ENCODE measurements at regions of chr11 and their contacts with region 1.

Region 1: GRCh38 chr11:120801801-120802689 is 221.9 kb upstream of the TBCEL start:
- DNase-seq: no peak
- H3K4me3 ChIP-seq: no peak overlapping the region
- CTCF ChIP-seq: peak; percentile 82

Region 2: DNA sequence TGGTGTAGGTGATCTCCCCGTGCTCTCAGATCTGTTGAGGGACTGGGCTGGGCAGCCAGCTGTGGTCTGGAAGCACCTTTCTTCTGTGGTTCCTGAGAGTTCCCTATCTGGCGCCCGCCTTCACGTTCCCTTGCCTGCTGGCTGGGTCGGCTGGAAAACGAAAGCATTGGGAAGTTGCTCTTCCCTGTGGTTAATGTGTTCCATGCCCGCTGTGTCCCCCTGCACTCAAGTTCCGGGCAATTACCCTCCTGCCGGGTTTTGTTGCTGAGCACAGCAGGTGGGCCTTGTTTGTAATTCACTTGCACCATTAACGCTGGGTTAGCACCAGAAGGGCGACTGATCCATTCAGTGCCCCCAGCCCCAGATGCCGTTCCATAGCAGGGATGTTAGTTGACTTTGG is 156.4 kb before region 1 on chr11:
- CTCF ChIA-PET with region 1: no interaction called
- POLR2A ChIA-PET with region 1: no interaction called
- DNase-seq: no peak
- H3K4me3 ChIP-seq: no peak overlapping the region
- CTCF ChIP-seq: no peak

Region 3: DNA sequence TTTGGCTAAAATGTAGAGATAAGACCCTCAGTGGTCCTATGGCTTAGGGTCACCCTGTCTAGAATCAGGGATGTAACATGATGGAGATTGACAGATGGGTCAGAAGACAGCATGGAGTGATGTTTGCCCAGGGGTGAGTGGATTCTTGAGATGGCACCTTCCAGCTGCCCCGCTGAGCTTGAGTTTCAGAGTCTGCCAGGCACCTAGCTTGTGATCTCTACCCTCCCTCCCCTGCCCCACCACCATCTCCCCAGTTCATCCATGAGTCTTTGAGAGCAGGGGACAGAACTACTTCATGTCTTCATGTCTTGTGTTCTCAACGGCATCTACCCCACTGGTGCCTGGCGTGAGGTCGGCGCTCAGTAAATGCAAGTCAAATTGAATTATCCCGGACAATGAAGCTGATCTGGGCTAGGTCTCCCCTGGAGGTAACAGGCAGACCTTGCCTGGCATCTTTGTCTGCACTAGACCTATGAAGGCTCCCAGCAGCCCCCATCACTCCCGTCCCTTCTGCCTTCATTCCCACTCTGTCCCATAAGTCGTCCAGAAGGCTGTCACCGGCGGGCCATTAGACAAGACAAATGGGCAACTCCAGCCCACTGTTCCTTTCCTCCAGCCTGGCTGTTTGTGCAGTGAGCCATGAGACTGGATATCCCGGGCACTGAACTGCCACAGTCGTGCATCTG is 17.3 kb before region 1 on chr11:
- CTCF ChIA-PET with region 1: interaction called, 10 read pairs
- POLR2A ChIA-PET with region 1: no interaction called
- DNase-seq: no peak
- H3K4me3 ChIP-seq: no peak overlapping the region
- CTCF ChIP-seq: no peak

Region 4: DNA sequence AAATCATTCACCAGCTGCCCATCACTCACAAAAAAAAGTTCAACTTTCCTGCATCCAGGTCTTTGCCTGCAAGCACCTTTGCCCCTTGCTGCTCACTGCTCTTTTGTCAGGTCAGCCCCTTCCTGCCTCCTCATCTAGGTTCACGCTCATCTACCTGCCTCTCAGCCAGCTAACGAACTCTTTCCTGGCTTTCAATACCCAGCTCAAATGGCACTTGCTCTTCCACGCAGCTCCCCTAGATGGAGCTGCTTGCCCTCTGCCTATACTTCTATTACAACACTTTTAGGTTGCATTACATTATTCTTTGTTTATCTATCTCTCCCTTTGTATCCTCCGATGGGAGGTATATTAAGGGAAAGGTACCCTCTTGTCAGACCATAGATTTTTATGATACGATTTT is 143.0 kb after region 1 on chr11:
- CTCF ChIA-PET with region 1: no interaction called
- POLR2A ChIA-PET with region 1: no interaction called
- DNase-seq: no peak
- H3K4me3 ChIP-seq: no peak overlapping the region
- CTCF ChIP-seq: no peak

Measured in AG04449 (cell line).